ENCODE measurements at regions of chr9 and their contacts with region 1.

Region 1: GRCh38 chr9:21395778-21396717 is 10.8 kb upstream of the IFNA2 start:
- DNase-seq: no peak
- H3K4me3 ChIP-seq: peak overlapping the region; percentile 35
- H3K27me3 ChIP-seq: peaks cover 12% of the 10 kb centered on the region
- CTCF ChIP-seq: peak; percentile 93

Region 2: DNA sequence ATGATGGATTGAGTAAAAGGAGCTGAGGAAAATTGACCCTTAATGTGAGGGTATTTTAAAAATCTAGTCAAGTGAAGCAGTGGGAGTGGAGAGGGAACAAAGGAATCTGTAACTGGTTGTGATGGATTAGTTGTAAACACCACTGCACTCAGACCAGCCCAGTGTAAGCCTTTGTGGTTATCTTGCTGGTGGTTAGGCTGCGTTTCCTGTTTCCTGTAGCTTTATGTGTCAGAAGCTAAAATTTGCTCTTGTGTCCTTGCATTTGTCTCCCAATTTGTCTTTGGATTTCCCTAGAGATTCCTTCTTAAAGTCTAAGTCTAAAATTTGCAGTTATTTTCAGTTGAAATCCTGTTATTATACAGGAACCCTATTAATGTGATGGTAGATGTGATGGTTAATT is 235.9 kb before region 1 on chr9:
- CTCF ChIA-PET with region 1: no interaction called
- POLR2A ChIA-PET with region 1: no interaction called
- DNase-seq: no peak
- H3K4me3 ChIP-seq: no peak overlapping the region
- H3K27me3 ChIP-seq: no peaks in the 10 kb centered on the region
- CTCF ChIP-seq: no peak

Region 3: DNA sequence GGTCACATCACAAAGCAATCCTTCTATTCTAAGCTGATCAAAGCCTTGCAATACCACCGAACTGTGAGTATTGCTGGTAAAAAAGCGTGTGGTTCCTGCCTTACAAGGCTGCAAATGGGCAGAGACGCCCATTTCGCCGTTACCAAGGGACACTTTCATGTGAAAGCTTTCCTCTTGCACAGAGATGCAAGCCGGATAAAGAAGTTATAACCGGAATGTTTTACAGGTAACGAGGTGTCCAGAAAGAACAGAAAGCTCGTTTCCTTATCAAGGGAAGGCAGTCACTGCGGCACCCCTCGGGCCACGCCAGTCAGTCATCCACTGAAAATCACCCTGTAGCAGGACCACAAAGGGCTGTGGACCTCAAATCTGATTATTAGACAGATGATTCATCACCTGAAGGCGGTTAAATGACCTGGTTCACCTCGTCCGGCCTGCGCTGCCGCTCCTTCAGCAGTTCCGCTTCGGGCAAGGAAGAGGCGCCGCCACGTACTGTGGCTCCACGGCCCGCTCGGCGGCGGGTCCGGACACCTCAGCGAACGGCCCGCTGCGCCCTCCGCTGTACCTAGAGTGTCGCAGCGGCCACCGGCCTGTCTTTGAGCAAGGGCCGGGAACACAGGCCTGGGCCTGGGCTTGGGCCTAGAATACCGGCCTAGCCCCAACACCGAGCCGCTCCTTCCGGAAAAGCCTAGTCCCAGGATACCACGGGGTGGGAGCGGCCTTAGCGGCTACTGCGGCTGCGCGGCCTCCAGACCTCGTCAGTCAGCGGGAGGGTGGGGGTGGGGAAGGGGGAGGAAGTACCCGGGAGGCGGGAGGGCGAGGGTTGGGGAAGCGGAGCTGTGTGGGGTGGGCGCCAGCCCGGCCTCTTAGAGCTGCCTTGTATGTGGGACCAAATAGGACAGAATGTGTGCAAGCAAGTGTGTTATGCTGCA is 61.1 kb before region 1 on chr9 and contains the start of gene KLHL9:
- CTCF ChIA-PET with region 1: interaction called, 17 read pairs
- POLR2A ChIA-PET with region 1: no interaction called
- DNase-seq: peak; percentile 49
- H3K4me3 ChIP-seq: peak within 1 kb of the TSS; percentile 66
- H3K27me3 ChIP-seq: no peaks in the 10 kb centered on the region; the same call in 1 of the 2 replicates
- CTCF ChIP-seq: no peak
- polyA plus RNA-seq, gene KLHL9: 14.4 and 25.9 TPM in 2 replicates

Region 4: DNA sequence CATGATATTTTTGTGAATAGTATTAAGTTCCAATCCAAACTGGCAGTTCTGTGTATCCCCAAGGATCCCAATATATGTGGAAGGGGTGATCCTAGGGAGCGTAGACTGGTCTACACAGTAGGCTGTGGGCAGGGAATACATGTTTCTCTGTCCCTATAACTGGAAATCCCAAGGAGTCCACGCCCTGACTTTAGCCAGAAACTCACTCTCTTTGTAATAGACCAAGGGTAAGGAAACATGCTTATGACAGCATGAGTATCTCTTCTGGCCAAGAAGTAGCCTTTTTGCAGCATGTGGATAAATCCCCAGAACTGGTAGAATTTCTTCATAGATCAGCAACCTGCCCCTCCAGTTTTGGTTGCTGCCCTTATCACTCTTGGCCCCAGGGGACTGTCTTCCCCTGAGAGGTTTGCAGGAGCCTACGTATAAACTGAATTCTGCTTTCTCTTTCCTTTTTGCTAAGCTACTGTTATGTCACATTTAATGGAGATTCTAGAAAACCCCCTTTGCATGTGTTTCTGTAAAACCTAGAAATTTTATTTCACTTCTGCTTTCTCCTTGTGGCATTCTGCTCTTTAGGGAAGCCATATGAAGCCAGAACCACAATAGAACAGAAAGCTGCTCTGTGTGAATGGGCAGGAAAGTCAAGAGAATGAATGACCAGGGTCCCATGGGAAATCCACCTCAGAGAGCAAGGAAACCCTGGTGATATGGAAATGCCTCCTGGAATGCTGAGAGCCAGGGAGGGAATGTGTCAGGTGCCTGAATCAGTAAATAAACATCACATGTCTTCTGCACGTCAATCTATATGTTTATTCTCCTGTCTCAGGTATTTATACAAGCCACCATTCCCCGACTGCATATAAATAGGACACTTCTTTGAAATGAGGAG is 14.4 kb before region 1 on chr9:
- CTCF ChIA-PET with region 1: interaction called, 33 read pairs
- POLR2A ChIA-PET with region 1: no interaction called
- DNase-seq: no peak
- H3K4me3 ChIP-seq: no peak overlapping the region
- H3K27me3 ChIP-seq: peaks cover 7% of the 10 kb centered on the region
- CTCF ChIP-seq: no peak

Region 5: GRCh38 chr9:21428235-21428634 is 32.2 kb after region 1 on chr9:
- CTCF ChIA-PET with region 1: interaction called, 11 read pairs
- POLR2A ChIA-PET with region 1: no interaction called
- DNase-seq: no peak
- H3K4me3 ChIP-seq: no peak overlapping the region
- H3K27me3 ChIP-seq: peaks cover 2% of the 10 kb centered on the region; the same call in 1 of the 2 replicates
- CTCF ChIP-seq: no peak

Region 6: GRCh38 chr9:21455320-21455719 is 59.3 kb after region 1 on chr9:
- CTCF ChIA-PET with region 1: interaction called, 13 read pairs
- POLR2A ChIA-PET with region 1: no interaction called
- DNase-seq: no peak
- H3K4me3 ChIP-seq: no peak overlapping the region
- H3K27me3 ChIP-seq: no peaks in the 10 kb centered on the region
- CTCF ChIP-seq: peak; percentile 77

Region 7: DNA sequence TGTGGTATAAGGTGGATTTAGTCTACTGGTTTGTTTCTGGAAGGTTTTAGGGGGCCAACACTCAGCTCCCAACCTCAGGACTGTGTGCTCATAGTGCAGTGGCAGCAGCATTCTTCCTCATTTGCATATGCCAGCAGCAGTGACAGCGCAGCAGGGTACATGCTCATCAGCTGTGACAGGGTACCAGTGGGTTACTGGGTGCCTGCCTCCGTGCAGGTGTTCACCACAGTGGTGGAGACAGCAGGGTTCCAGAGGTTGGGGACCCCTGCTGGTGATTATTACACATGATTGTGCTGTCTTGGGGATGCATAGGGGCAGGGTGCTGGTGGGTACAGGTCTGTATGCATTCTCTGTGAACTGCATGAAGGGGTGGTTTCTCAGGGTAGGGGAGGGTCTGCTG is 131.5 kb after region 1 on chr9:
- CTCF ChIA-PET with region 1: no interaction called
- POLR2A ChIA-PET with region 1: no interaction called
- DNase-seq: no peak
- H3K4me3 ChIP-seq: no peak overlapping the region
- H3K27me3 ChIP-seq: no peaks in the 10 kb centered on the region
- CTCF ChIP-seq: no peak